HepG2 (cell line): ENCODE measurements at regions of chr15 and their contacts with region 1.

Region 1: DNA sequence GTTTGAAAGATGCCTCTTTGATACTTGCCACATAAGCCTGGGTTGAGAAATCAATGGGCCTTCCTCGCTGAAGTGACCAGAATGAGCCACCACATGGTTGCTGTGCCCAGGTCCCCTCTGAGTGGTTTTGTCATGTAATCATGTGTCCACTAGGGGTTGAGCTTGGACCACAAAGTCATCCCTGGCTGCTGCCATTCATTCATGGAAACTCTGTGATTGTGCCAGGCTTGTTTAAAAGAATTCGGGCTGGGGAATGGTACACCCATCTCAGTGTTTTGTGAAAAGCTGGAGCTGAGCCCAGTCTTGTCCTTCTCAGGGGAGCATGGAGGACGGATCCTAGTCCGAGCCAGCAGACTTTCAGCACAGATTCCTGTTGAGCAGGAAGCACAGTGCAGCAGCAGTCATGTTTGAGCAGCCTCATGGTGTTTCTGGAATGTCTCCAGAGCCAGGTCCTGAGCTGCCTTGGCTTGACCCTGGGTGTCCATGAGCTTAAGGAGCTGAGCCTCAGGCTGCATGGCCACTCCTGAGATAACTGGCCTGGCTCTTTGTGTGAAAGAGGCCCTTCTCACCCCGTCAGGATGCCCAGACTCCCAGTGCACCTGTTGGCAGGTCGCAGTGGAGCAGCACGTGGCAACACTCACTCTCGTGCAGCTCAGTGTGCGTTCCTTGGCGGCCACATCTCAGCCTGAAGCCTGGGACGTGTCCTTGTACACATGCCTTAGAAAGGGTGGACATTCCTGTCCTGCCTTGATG is 260.3 kb upstream of the TPM1 start:
- DNase-seq: peak; percentile 78
- ATAC-seq: peak; percentile 97
- H3K4me3 ChIP-seq: no peak overlapping the region
- H3K27ac ChIP-seq: no peak overlapping the region
- H3K4me1 ChIP-seq: peaks cover 38% of the 10 kb centered on the region
- H3K27me3 ChIP-seq: no peaks in the 10 kb centered on the region
- CTCF ChIP-seq: peak; percentile 94
- EP300 ChIP-seq: no peak
- POLR2A ChIP-seq: no peak
- RAD21 ChIP-seq: peak; percentile 95

Region 2: DNA sequence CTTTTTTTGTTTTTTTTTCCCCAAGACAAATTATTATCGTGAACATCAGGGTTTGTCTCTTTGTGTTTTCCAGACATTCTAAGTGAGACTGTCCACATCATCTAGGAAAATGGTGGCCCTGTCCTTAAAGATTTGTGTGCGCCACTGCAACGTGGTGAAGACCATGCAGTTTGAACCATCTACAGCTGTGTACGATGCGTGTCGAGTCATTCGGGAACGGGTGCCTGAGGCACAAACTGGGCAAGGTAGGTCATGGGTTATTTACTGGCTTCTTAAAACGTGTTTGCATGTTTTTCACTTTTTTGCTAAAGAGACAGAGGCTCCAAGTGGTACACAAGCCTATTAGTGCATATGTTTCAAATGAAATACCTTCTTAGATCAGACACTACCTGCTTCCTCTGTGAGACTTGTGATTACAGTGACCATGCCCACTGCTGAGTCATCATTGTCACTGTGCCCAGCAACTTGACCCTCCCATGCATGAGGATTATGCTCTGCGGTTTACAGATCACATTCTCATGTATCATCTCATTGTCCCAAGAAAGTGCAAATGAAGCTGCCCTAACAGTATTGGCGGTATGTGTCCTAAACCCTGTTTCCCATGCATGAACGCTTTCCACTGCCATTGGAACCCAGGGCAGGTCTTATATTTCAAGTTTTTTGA is 134.9 kb before region 1 on chr15:
- CTCF ChIA-PET with region 1: no interaction called
- POLR2A ChIA-PET with region 1: no interaction called
- in situ Hi-C with region 1: no loop called
- intact Hi-C with region 1: no loop called
- DNase-seq: peak; percentile 61
- ATAC-seq: no peak
- H3K4me3 ChIP-seq: no peak overlapping the region
- H3K27ac ChIP-seq: no peak overlapping the region
- H3K4me1 ChIP-seq: peaks cover 27% of the 10 kb centered on the region
- H3K27me3 ChIP-seq: no peaks in the 10 kb centered on the region
- CTCF ChIP-seq: no peak
- EP300 ChIP-seq: no peak
- POLR2A ChIP-seq: no peak
- RAD21 ChIP-seq: no peak

Region 3: DNA sequence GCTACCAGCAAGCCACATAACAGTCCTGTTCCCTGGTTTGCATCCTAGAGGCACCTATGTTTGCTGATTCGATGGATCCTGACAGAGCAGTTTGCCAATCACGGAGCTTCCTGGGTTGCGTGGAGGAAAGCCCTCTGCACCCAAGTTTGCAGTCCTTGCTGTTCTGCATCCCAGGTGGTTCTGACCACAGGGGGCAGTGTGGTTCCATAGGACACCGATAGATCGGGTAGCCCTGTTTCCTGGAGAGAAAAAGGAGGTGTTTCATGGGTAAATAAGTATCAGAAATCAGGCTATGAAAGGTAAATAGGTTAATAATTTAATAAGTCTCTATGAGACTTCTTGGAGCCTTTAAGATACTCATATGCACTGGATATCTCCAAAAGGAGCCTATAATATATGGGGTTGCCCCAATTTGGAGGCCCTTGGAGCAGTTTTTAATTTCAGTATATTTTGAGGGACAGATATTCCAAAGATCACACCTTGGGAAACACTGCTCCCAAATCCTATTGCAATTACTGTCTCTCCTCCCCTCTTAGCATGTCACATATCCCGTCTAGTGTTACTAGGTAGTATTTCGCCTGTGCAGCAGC is 65.8 kb after region 1 on chr15:
- CTCF ChIA-PET with region 1: interaction called, 4 read pairs
- POLR2A ChIA-PET with region 1: interaction called, 3 read pairs
- in situ Hi-C with region 1: loop called (anchors 5 kb)
- intact Hi-C with region 1: loop called (anchors 5 kb)
- DNase-seq: peak; percentile 44
- ATAC-seq: peak; percentile 52
- H3K4me3 ChIP-seq: no peak overlapping the region
- H3K27ac ChIP-seq: peak overlapping the region; percentile 43
- H3K4me1 ChIP-seq: peaks cover 74% of the 10 kb centered on the region
- H3K27me3 ChIP-seq: no peaks in the 10 kb centered on the region
- CTCF ChIP-seq: peak; percentile 83
- EP300 ChIP-seq: no peak
- POLR2A ChIP-seq: no peak
- RAD21 ChIP-seq: peak; percentile 65

Region 4: DNA sequence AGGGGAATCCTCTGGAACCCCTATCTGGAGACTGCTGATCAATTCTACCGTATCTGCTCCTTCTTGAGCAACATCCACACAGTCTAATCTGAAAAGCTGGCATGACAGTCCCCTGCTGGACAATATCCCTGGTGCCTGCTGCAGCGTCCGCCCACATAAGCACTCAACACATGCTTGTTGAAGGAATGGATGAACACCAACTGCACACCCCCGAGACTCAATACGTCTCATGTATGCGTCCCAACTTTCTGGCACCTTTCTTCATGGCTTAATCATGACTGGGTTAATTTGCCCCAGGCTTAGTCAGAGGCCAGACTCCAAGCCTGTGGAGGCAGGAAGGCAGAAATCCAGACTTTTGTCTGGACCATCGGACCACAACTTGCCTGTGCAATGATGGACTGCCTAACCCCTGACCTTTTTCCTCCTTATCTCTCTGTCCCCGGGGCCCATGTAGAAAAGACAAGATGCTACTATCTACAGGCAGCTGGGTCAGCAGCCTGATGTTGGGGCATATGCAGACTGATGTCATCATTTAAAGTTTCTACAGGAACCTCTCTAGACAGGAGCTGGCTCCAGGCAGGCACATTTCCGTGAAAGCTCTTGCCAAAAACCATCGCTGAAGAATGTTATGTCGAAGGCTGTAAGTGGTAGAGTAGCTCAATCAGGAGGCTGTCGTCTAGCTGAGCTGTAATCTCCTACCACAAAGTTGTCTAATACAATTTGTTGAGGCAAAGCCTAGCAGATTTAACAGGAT is 146.2 kb after region 1 on chr15:
- CTCF ChIA-PET with region 1: interaction called, 7 read pairs
- POLR2A ChIA-PET with region 1: interaction called, 3 read pairs
- in situ Hi-C with region 1: no loop called
- intact Hi-C with region 1: loop called (anchors 2 kb)
- DNase-seq: peak; percentile 37
- ATAC-seq: peak; percentile 94
- H3K4me3 ChIP-seq: no peak overlapping the region
- H3K27ac ChIP-seq: no peak overlapping the region
- H3K4me1 ChIP-seq: peaks cover 19% of the 10 kb centered on the region
- H3K27me3 ChIP-seq: no peaks in the 10 kb centered on the region; a peak in 1 of 5 replicates
- CTCF ChIP-seq: peak; percentile 68
- EP300 ChIP-seq: no peak
- POLR2A ChIP-seq: no peak
- RAD21 ChIP-seq: peak; percentile 46; the same call in 1 of the 2 replicates

Region 5: DNA sequence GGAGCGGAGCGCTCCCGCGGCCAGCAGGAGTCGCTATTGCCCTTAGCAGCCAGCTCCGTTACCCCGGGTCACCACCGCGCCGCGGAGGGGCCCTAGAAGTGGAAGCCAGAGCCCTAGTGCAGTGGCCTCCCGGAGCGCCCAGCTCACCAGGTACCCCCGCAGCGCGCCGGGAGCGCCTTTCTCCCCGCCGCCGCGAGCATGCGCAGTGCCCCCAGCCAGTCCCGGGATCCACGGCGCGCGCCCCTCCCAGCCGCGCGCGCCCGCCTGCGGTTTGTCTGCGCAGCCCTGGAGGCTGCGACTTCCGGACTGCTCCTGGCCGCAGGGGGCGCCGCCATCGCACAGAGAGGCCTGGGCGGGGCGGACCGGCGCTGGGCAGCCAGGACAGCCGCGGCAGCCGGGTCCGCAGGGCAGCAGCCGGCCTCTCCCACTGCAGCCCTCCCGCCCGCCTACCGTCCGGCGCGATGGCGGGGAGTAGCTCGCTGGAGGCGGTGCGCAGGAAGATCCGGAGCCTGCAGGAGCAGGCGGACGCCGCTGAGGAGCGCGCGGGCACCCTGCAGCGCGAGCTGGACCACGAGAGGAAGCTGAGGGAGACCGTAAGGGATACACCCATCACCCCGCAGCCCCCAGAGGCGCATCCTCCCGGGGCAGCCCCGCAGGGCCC is 266.0 kb after region 1 on chr15:
- CTCF ChIA-PET with region 1: no interaction called
- POLR2A ChIA-PET with region 1: interaction called, 3 read pairs
- in situ Hi-C with region 1: loop called (anchors 5 kb)
- intact Hi-C with region 1: no loop called
- DNase-seq: peak; percentile 93
- ATAC-seq: peak; percentile 93
- H3K4me3 ChIP-seq: peak overlapping the region; percentile 67 to 86 (median 80)
- H3K27ac ChIP-seq: peak overlapping the region; percentile 67
- H3K4me1 ChIP-seq: peaks cover 82% of the 10 kb centered on the region
- H3K27me3 ChIP-seq: no peaks in the 10 kb centered on the region
- CTCF ChIP-seq: peak; percentile 91
- EP300 ChIP-seq: no peak; a peak in 2 of 4 replicates
- POLR2A ChIP-seq: peak; percentile 46 to 78
- RAD21 ChIP-seq: peak; percentile 100

Region 6: DNA sequence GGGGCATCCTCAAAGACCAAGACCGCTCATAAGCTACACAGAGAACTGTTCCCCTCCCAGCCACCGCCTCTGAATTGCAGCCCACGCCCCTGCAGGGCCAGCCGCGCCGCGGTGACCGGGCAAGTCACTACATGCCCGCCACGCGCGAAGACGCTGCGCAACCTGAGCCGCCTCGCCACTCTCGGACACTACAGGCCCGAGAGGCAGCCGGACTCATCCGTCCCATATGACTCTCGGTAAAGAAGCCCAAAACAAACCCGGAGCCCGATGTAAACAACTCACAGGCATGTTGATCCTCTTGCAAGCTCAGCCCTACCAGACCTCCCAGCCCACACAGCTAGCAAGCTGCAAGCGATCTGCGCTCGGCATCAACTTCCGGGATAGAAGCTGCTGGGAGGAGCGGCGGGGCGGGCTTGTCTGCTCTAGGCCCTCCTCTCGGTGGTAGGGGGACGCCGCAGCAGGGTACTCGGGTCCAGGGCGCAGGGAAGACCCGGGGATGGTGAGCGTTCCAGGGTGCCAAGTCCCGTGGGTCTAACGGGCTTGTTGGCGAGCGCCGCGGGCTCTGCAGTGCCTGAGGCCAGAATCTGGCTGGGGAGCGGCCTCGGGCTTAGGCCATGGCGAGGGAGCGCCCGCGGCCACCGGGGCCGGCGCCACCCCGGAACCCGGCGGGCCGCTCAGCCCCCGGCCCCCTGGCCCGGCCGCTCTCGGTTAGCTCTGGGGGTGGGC is 375.1 kb after region 1 on chr15 and contains the start of gene RPS27L:
- CTCF ChIA-PET with region 1: no interaction called
- POLR2A ChIA-PET with region 1: no interaction called
- in situ Hi-C with region 1: no loop called
- intact Hi-C with region 1: loop called (anchors 10 kb)
- DNase-seq: peak; percentile 88
- ATAC-seq: peak; percentile 98
- H3K4me3 ChIP-seq: peak within 1 kb of the TSS; percentile 78 to 96 (median 96)
- H3K27ac ChIP-seq: peak within 1 kb of the TSS; percentile 89
- H3K4me1 ChIP-seq: peaks cover 24% of the 10 kb centered on the region
- H3K27me3 ChIP-seq: no peaks in the 10 kb centered on the region; a peak in 1 of 5 replicates
- CTCF ChIP-seq: no peak
- EP300 ChIP-seq: no peak; a peak in 1 of 4 replicates
- POLR2A ChIP-seq: peak; percentile 91 to 95
- RAD21 ChIP-seq: peak; percentile 43; the same call in 1 of the 2 replicates
- total RNA-seq, gene RPS27L: 433 and 596 TPM in 2 replicates